Testis (tissue), 5 donors: ENCODE measurements at regions of chr9 and their contacts with region 1.

Region 1: GRCh38 chr9:131334629-131335367 is 45.3 kb downstream of the PLPP7 start:
- DNase-seq: peak; percentile 50
- H3K4me3 ChIP-seq: no peak overlapping the region
- H3K27ac ChIP-seq: peak overlapping the region; percentile 52 to 57
- H3K4me1 ChIP-seq: peaks cover 21% of the 10 kb centered on the region
- H3K27me3 ChIP-seq: no peaks in the 10 kb centered on the region
- CTCF ChIP-seq: no peak
- POLR2A ChIP-seq: no peak

Region 2: GRCh38 chr9:131178382-131178781 is 156.4 kb before region 1 on chr9:
- intact Hi-C with region 1: loop called (anchors 10 kb)
- DNase-seq: peak; percentile 82
- H3K4me3 ChIP-seq: no peak overlapping the region
- H3K27ac ChIP-seq: no peak overlapping the region
- H3K4me1 ChIP-seq: peaks cover 11% of the 10 kb centered on the region
- H3K27me3 ChIP-seq: no peaks in the 10 kb centered on the region
- CTCF ChIP-seq: peak; percentile 85 to 91 (median 87)
- POLR2A ChIP-seq: no peak

Region 3: DNA sequence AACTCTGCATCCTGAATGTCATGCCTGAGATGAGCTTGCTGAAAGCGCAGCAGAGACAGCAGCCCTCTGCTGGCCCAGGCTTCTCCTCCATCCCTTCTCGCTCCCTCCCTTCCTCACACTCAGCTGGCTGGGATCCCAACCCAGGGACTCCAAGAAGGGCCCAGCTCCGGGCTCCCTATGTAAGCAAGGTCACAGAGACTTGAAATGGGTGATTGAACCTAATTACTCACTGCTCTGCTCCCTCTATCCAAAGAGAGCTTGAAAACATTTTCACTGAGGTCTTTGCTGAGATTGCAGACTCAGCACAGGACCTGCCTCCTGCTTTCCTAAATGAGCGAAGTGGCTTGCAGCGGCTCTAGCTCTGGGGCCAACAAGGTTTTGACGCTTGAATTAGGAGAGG is 362.3 kb after region 1 on chr9:
- intact Hi-C with region 1: no loop called
- DNase-seq: peak; percentile 77
- H3K4me3 ChIP-seq: no peak overlapping the region
- H3K27ac ChIP-seq: no peak overlapping the region
- H3K4me1 ChIP-seq: peaks cover 20% of the 10 kb centered on the region
- H3K27me3 ChIP-seq: no peaks in the 10 kb centered on the region
- CTCF ChIP-seq: no peak
- POLR2A ChIP-seq: no peak